ENCODE measurements at regions of chr1 and their contacts with region 1.

Region 1: GRCh38 chr1:110034451-110035235 is at the start of gene STRIP1:
- DNase-seq: peak; percentile 95
- H3K4me3 Mint-ChIP-seq: peak within 1 kb of the TSS; percentile 90
- H3K27ac Mint-ChIP-seq: peak within 1 kb of the TSS; percentile 74
- H3K4me1 Mint-ChIP-seq: peaks cover 62% of the 10 kb centered on the region
- H3K27me3 Mint-ChIP-seq: no peaks in the 10 kb centered on the region
- total RNA-seq, gene STRIP1: 34.1 to 34.7 TPM

Region 2: DNA sequence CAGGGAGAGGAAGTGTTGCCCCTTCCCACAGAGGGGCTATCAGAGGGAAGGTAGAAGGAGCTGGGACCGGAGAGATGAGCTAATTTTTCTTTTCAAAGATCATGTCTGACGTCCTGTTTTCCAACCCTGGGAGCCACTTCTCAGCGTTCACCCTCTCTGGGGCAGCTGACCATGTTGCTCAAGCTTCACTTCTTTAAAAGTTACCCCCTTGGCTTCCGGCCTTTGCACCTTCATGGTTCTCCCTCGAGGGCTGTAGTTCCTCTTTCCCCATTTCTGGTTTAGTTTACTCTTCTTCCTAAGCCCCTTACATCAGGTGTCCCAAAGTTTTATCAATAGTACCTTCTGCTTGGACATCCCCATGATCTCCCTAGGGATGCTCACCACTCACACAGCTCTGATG is 147.8 kb before region 1 on chr1:
- CTCF ChIA-PET with region 1: no interaction called
- POLR2A ChIA-PET with region 1: no interaction called
- DNase-seq: no peak
- H3K4me3 Mint-ChIP-seq: no peak overlapping the region
- H3K27ac Mint-ChIP-seq: no peak overlapping the region
- H3K4me1 Mint-ChIP-seq: peaks cover 26% of the 10 kb centered on the region
- H3K27me3 Mint-ChIP-seq: no peaks in the 10 kb centered on the region

Region 3: GRCh38 chr1:110003747-110004630 is 30.7 kb before region 1 on chr1:
- CTCF ChIA-PET with region 1: interaction called, 14 read pairs
- POLR2A ChIA-PET with region 1: interaction called, 13 read pairs
- DNase-seq: peak; percentile 49
- H3K4me3 Mint-ChIP-seq: no peak overlapping the region
- H3K27ac Mint-ChIP-seq: peak overlapping the region; percentile 41
- H3K4me1 Mint-ChIP-seq: peaks cover 25% of the 10 kb centered on the region
- H3K27me3 Mint-ChIP-seq: no peaks in the 10 kb centered on the region

Region 4: GRCh38 chr1:110019770-110020169 is 14.9 kb before region 1 on chr1:
- CTCF ChIA-PET with region 1: interaction called, 16 read pairs
- POLR2A ChIA-PET with region 1: interaction called, 6 read pairs
- DNase-seq: no peak
- H3K4me3 Mint-ChIP-seq: no peak overlapping the region
- H3K27ac Mint-ChIP-seq: no peak overlapping the region
- H3K4me1 Mint-ChIP-seq: no peaks in the 10 kb centered on the region
- H3K27me3 Mint-ChIP-seq: no peaks in the 10 kb centered on the region

Measured in activated CD4-positive, alpha-beta memory T cell treated with anti-CD3 and anti-CD28 coated beads, Interleukin-2, amount 10 ng/mL, durations not matched to agents 7 days and 5 days (primary cell).